Tibial artery (tissue), 4 donors: ENCODE measurements at regions of chr7 and their contacts with region 1.

Region 1: GRCh38 chr7:43879477-43879876 is 10.2 kb upstream of the MRPS24 start:
- DNase-seq: no peak
- H3K4me3 ChIP-seq: no peak overlapping the region
- H3K27ac ChIP-seq: peak overlapping the region; percentile 41 to 47
- H3K4me1 ChIP-seq: peaks cover 0 to 31% (median 14%) of the 10 kb centered on the region in 4 donors
- H3K27me3 ChIP-seq: no peaks in the 10 kb centered on the region
- CTCF ChIP-seq: no peak

Region 2: GRCh38 chr7:43758029-43758821 is 121.3 kb before region 1 on chr7 and contains the start of gene BLVRA:
- intact Hi-C with region 1: no loop called
- DNase-seq: peak; percentile 62 to 86
- H3K4me3 ChIP-seq: peak within 1 kb of the TSS; percentile 72 to 78
- H3K27ac ChIP-seq: peak within 1 kb of the TSS; percentile 77 to 80
- H3K4me1 ChIP-seq: peaks cover 0 to 13% (median 2%) of the 10 kb centered on the region in 4 donors
- H3K27me3 ChIP-seq: no peaks in the 10 kb centered on the region
- CTCF ChIP-seq: no peak

Region 3: GRCh38 chr7:43834463-43835251 is 44.8 kb before region 1 on chr7:
- intact Hi-C with region 1: no loop called
- DNase-seq: no peak
- H3K4me3 ChIP-seq: peak overlapping the region in 1 of 2 donors; percentile 20
- H3K27ac ChIP-seq: no peak overlapping the region
- H3K4me1 ChIP-seq: peaks cover 0 to 8% (median 4%) of the 10 kb centered on the region in 4 donors
- H3K27me3 ChIP-seq: peaks cover 0 to 3% of the 10 kb centered on the region in 2 donors
- CTCF ChIP-seq: no peak

Region 4: GRCh38 chr7:43851805-43852204 is 27.7 kb before region 1 on chr7:
- intact Hi-C with region 1: loop called (anchors 1 kb)
- DNase-seq: no peak
- H3K4me3 ChIP-seq: no peak overlapping the region
- H3K27ac ChIP-seq: no peak overlapping the region
- H3K4me1 ChIP-seq: no peaks in the 10 kb centered on the region
- H3K27me3 ChIP-seq: no peaks in the 10 kb centered on the region
- CTCF ChIP-seq: no peak

Region 5: GRCh38 chr7:44059219-44060090 is 180.0 kb after region 1 on chr7:
- intact Hi-C with region 1: no loop called
- DNase-seq: peak; percentile 16 to 62
- H3K4me3 ChIP-seq: no peak overlapping the region
- H3K27ac ChIP-seq: no peak overlapping the region
- H3K4me1 ChIP-seq: peaks cover 0 to 27% (median 21%) of the 10 kb centered on the region in 4 donors
- H3K27me3 ChIP-seq: no peaks in the 10 kb centered on the region
- CTCF ChIP-seq: no peak

Region 6: GRCh38 chr7:44235582-44236332 is 356.3 kb after region 1 on chr7:
- intact Hi-C with region 1: no loop called
- DNase-seq: no peak
- H3K4me3 ChIP-seq: no peak overlapping the region
- H3K27ac ChIP-seq: no peak overlapping the region
- H3K4me1 ChIP-seq: no peaks in the 10 kb centered on the region
- H3K27me3 ChIP-seq: peaks cover 0 to 16% of the 10 kb centered on the region in 2 donors
- CTCF ChIP-seq: no peak